Lower lobe of right lung (tissue), 2 donors: ENCODE measurements at regions of chr2 and their contacts with region 1.

Region 1: DNA sequence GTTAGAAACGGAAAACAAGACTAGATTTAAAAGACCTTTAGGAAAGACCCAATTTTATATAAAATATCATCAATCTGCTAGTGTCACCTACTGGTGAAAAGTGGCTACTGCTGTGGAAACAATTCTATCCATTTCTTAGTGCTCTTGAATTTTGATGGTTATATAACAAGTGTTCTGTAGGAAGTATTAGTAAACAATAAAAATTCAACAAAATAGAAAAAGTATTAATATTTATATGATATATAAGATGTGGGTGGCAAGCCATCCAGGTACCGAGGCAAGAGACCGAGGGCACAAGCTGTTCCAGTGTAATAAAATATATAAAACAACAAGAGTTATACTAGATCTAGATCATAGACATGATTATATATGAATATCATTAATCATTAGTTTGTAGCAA is 6.2 kb upstream of the TMEM87B start:
- DNase-seq: no peak
- ATAC-seq: peak; percentile 85 to 86
- H3K4me3 ChIP-seq: no peak overlapping the region
- H3K27ac ChIP-seq: no peak overlapping the region
- H3K4me1 ChIP-seq: peaks cover 22% of the 10 kb centered on the region
- H3K27me3 ChIP-seq: no peaks in the 10 kb centered on the region
- CTCF ChIP-seq: peak; percentile 80

Region 2: DNA sequence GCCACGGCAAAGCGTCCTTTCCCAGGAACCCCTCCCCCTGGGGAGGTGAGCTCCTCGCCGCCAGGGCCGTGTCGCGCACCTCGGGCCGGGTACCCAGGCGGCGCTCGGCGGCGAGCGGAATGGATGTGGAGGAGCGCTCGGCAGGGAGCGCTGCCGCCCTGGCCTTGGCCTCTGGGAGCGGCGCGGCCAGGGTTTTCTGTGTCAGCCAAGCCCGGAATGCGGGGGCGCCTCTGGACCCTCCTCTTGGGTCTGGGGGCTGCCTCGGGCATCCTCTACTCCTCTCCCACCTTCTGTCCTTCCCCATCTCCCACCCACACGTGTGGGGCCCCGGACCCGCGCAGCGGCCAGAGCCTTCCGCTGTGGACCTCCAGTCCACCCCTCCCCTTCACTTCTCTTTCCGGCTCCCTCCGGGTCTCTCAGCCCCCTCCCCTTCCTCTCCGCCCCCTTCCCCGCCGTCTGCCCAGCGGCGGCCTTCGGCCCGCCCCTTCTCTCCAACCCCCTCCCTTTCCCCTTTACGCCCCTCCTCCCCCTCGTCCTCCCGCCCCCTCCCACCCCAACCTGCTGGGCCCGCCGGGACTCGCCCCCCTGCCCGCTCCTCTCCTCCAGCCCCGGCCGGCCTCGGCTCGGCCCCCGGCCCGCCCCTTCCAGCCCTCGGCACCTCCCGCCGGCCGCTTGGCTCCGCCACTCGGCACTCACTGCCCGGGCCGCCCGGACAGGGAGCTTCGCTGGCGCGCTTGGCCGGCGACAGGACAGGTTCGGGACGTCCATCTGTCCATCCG is 150.8 kb before region 1 on chr2 and contains the start of gene MERTK:
- intact Hi-C with region 1: loop called (anchors 10 kb)
- DNase-seq: peak; percentile 89
- ATAC-seq: peak; percentile 95
- H3K4me3 ChIP-seq: peak within 1 kb of the TSS; percentile 96
- H3K27ac ChIP-seq: peak within 1 kb of the TSS; percentile 88
- H3K4me1 ChIP-seq: peaks cover 30% of the 10 kb centered on the region
- H3K27me3 ChIP-seq: no peaks in the 10 kb centered on the region
- CTCF ChIP-seq: peak; percentile 64
- total RNA-seq, gene MERTK: 20.7 TPM